ENCODE measurements at regions of chr1 and their contacts with region 1.

Region 1: DNA sequence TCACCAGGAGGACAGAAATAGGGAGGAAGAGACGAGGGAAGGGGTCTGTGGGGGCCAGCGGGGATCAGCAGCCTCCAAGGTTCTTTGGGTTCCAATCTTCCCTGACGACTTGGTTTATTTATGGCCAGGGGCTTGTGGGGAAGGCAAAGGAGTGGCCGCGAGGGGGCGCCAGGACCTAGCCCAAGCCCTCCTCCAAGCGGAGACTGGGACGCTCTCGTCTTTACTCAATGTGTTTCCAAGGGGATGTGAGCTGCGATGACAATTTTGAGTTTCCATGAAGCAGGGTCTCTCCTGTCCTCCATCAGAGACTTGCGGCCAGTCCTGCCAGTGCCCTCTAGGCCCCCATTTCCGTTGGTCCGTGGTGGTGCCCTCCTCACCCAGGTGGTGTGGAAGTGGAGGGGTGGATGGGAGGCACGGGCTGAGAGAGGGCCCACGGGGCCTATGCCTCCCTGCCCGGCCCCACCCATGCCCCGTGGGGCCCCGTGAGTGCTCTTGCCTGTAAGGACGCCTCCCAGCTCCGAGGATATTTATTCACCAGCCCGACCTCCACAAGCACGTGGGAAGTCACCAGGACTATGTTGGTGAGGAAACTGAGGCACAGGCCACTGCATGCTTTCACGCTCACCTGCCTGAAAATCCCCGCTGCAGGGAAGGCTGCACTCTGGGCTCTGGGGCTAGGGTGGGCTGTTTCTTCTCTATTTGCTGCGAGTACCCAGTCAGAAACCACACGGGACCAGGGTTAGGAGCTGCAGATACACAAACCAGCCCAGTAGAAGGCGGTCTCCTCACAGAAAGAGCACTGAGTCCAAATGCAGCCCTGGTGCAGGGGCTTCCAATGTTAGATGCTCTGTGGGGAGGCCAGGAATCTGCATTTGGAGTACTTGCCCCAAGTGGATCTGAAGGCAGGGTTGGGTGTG is 26.5 kb downstream of the DMRTB1 start:
- DNase-seq: peak; percentile 68 to 81
- H3K4me3 ChIP-seq: no peak overlapping the region
- H3K4me3 Mint-ChIP-seq: no peak overlapping the region
- H3K27ac Mint-ChIP-seq: no peak overlapping the region
- H3K4me1 ChIP-seq: no peaks in the 10 kb centered on the region
- H3K4me1 Mint-ChIP-seq: no peaks in the 10 kb centered on the region
- H3K27me3 ChIP-seq: no peaks in the 10 kb centered on the region; the same call in 1 of the 2 replicates
- H3K27me3 Mint-ChIP-seq: peaks cover 18% of the 10 kb centered on the region
- CTCF ChIP-seq: peak; percentile 74 to 81

Region 2: GRCh38 chr1:53450225-53450624 is 35.5 kb before region 1 on chr1:
- CTCF ChIA-PET with region 1: no interaction called
- POLR2A ChIA-PET with region 1: no interaction called
- intact Hi-C with region 1: no loop called
- DNase-seq: no peak
- H3K4me3 ChIP-seq: no peak overlapping the region
- H3K4me3 Mint-ChIP-seq: no peak overlapping the region
- H3K27ac Mint-ChIP-seq: no peak overlapping the region
- H3K4me1 ChIP-seq: peaks cover 5% of the 10 kb centered on the region; the same call in 1 of the 2 replicates
- H3K4me1 Mint-ChIP-seq: peaks cover 6% of the 10 kb centered on the region
- H3K27me3 ChIP-seq: no peaks in the 10 kb centered on the region
- H3K27me3 Mint-ChIP-seq: no peaks in the 10 kb centered on the region
- CTCF ChIP-seq: peak in 1 of 2 experiments; percentile 19

Region 3: DNA sequence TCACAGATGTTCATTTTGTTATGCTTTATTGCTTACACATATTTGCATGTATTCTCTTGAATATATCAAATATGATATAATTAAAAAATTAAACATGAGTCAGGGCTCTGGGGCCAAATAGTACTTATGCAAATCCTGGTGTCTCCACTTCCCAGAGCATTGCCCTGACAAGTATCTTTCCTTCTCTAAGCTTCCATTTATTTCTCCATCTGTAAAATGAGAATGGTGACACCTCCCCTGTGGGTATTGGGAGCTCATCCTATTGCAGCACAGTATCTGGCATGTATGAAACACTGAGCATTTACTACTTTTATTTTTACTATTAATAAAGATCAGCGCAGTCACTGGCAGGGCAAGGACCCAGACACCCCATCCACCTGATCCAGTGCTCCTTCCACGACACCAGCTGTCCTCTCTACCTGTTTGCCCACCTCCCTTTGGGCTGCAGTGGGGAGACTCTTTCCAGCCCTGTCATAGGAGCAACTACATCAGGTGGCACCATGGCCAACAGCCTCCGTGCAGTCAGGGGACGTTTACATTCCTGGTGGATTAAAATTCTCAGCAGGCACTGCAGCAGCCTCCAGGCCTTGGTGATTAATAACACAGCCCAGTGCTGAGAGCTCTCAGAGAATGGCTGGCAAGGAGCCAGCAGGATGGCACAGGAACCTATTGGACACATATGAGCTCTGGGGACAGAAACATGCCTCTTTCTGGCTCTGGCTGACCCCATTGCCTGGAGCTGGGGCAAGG is 86.5 kb after region 1 on chr1:
- CTCF ChIA-PET with region 1: no interaction called
- POLR2A ChIA-PET with region 1: interaction called, 11 read pairs
- intact Hi-C with region 1: loop called (anchors 5 kb)
- DNase-seq: peak; percentile 32 to 40
- H3K4me3 ChIP-seq: no peak overlapping the region
- H3K4me3 Mint-ChIP-seq: no peak overlapping the region
- H3K27ac Mint-ChIP-seq: no peak overlapping the region
- H3K4me1 ChIP-seq: no peaks in the 10 kb centered on the region
- H3K4me1 Mint-ChIP-seq: no peaks in the 10 kb centered on the region
- H3K27me3 ChIP-seq: no peaks in the 10 kb centered on the region; the same call in 1 of the 2 replicates
- H3K27me3 Mint-ChIP-seq: no peaks in the 10 kb centered on the region
- CTCF ChIP-seq: no peak

Region 4: DNA sequence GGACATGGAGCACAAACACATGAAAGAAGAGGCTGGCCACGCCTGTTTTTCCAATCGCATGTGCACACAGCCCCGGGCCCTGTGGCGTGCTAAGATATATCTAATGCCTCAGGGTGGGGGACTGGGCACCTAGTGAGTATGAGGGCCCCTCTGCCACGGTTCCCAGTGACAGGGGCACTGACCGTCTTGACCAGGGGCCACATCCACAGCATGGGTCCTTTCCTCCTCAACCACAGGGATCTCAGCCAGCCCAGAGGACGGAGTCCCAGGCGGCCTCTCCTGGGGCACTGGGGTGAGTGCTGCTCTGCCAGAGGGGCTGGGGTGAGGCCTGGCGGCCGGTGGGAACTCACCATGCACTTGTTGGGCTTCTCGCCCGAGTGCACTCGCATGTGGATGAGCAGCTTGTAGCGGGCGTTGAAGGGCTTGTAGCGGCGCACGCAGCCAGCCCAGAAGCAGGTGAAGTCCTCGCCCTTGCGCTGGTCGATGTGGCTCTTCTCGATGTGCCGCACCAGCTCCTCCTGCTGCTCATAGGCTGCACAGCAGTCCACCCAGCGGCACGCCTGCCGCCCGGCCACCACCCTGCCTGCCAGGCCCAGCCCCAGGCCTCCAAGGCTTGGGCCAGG is 108.1 kb after region 1 on chr1:
- CTCF ChIA-PET with region 1: interaction called, 6 read pairs
- POLR2A ChIA-PET with region 1: no interaction called
- intact Hi-C with region 1: loop called (anchors 1 kb)
- DNase-seq: no peak
- H3K4me3 ChIP-seq: no peak overlapping the region
- H3K4me3 Mint-ChIP-seq: no peak overlapping the region
- H3K27ac Mint-ChIP-seq: no peak overlapping the region
- H3K4me1 ChIP-seq: no peaks in the 10 kb centered on the region
- H3K4me1 Mint-ChIP-seq: no peaks in the 10 kb centered on the region
- H3K27me3 ChIP-seq: no peaks in the 10 kb centered on the region
- H3K27me3 Mint-ChIP-seq: no peaks in the 10 kb centered on the region
- CTCF ChIP-seq: no peak

Region 5: GRCh38 chr1:53636621-53637171 is 151.0 kb after region 1 on chr1:
- CTCF ChIA-PET with region 1: interaction called, 10 read pairs
- POLR2A ChIA-PET with region 1: no interaction called
- intact Hi-C with region 1: loop called (anchors 1 kb)
- DNase-seq: peak; percentile 26 to 41
- H3K4me3 ChIP-seq: no peak overlapping the region
- H3K4me3 Mint-ChIP-seq: no peak overlapping the region
- H3K27ac Mint-ChIP-seq: no peak overlapping the region
- H3K4me1 ChIP-seq: no peaks in the 10 kb centered on the region
- H3K4me1 Mint-ChIP-seq: no peaks in the 10 kb centered on the region
- H3K27me3 ChIP-seq: no peaks in the 10 kb centered on the region
- H3K27me3 Mint-ChIP-seq: peaks cover 3% of the 10 kb centered on the region
- CTCF ChIP-seq: no peak

Region 6: GRCh38 chr1:53681977-53682685 is 196.4 kb after region 1 on chr1:
- CTCF ChIA-PET with region 1: interaction called, 8 read pairs
- POLR2A ChIA-PET with region 1: no interaction called
- intact Hi-C with region 1: loop called (anchors 1 kb)
- DNase-seq: peak; percentile 66 to 76
- H3K4me3 ChIP-seq: no peak overlapping the region
- H3K4me3 Mint-ChIP-seq: no peak overlapping the region
- H3K27ac Mint-ChIP-seq: no peak overlapping the region
- H3K4me1 ChIP-seq: peaks cover 17% of the 10 kb centered on the region
- H3K4me1 Mint-ChIP-seq: peaks cover 29% of the 10 kb centered on the region
- H3K27me3 ChIP-seq: no peaks in the 10 kb centered on the region
- H3K27me3 Mint-ChIP-seq: peaks cover 2% of the 10 kb centered on the region
- CTCF ChIP-seq: peak; percentile 62 to 72

Region 7: GRCh38 chr1:53889304-53890298 is 403.9 kb after region 1 on chr1 and contains the start of gene YIPF1:
- CTCF ChIA-PET with region 1: no interaction called
- POLR2A ChIA-PET with region 1: no interaction called
- intact Hi-C with region 1: no loop called
- DNase-seq: peak; percentile 83 to 85
- H3K4me3 ChIP-seq: peak within 1 kb of the TSS; percentile 69
- H3K4me3 Mint-ChIP-seq: peak within 1 kb of the TSS; percentile 93
- H3K27ac Mint-ChIP-seq: peak within 1 kb of the TSS; percentile 89
- H3K4me1 ChIP-seq: peaks cover 20% of the 10 kb centered on the region
- H3K4me1 Mint-ChIP-seq: peaks cover 9% of the 10 kb centered on the region
- H3K27me3 ChIP-seq: no peaks in the 10 kb centered on the region
- H3K27me3 Mint-ChIP-seq: no peaks in the 10 kb centered on the region
- CTCF ChIP-seq: no peak
- total RNA-seq, gene YIPF1: 16.6 and 17.2 TPM in 2 replicates